SK-N-SH (cell line): ENCODE measurements at regions of chr1 and their contacts with region 1.

Region 1: DNA sequence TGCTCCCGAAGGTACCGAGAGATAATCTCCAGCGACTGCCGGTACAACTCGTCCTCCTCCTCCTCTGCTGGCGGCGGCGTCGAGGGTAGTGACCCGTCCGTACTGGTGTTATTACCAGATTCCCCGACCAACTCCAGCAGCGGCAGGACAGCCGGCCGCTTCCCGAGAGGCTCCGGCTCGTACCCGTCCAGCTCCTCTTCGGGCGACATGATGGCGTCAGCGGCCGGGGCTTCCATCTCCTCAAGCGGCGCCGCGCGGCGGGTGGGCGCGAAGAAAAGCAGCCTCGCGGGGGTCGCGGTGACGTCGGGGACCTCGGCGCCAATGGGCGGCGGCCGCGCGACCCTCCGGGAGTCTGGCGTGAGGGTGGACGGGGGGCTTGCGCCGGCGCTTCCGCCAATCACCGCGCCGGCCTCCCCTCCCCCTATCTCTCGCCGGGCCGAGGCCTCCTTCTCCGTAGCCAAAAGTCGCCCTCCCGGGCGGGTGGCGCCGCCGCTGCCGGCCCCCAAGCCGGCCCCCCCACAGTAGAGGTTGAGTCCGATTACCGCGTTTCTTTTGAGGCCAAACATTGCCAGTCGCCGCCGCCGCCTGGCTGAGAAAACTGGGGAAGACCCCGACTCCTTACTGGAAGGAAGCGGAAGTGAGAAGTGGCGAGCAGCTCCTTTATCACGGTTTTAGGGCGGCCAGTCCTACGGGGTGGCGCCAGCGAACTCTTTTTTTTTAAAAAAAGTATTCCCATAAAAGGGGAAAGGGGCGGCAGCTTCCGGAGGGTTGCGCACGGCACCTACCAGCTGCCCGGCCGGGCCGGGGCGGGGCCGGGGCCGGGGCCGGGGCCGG is at the start of gene MCL1:
- DNase-seq: peak; percentile 94
- H3K4me3 ChIP-seq: peak within 1 kb of the TSS; percentile 95 to 98
- H3K27ac ChIP-seq: peak within 1 kb of the TSS; percentile 97 to 100
- H3K4me1 ChIP-seq: peaks cover 9 to 28% of the 10 kb centered on the region in 2 experiments; a peak in 3 of 4 replicates
- H3K27me3 ChIP-seq: no peaks in the 10 kb centered on the region
- CTCF ChIP-seq: no peak
- EP300 ChIP-seq: 0 out of 4 replicates have a peak, but pooled peaks of 1 of the 2 experiments have one; percentile 56
- RAD21 ChIP-seq: no peak
- polyA plus RNA-seq, gene MCL1: 110 and 131 TPM in 2 replicates

Region 2: GRCh38 chr1:150449451-150449850 is 129.7 kb before region 1 on chr1:
- CTCF ChIA-PET with region 1: no interaction called
- POLR2A ChIA-PET with region 1: no interaction called
- DNase-seq: no peak
- H3K4me3 ChIP-seq: no peak overlapping the region
- H3K27ac ChIP-seq: no peak overlapping the region
- H3K4me1 ChIP-seq: no peaks in the 10 kb centered on the region
- H3K27me3 ChIP-seq: no peaks in the 10 kb centered on the region
- CTCF ChIP-seq: no peak
- EP300 ChIP-seq: no peak
- RAD21 ChIP-seq: no peak

Region 3: GRCh38 chr1:150567717-150568593 is 11.2 kb before region 1 on chr1:
- CTCF ChIA-PET with region 1: interaction called, 142 read pairs
- POLR2A ChIA-PET with region 1: interaction called, 149 read pairs
- DNase-seq: peak; percentile 56
- H3K4me3 ChIP-seq: peak overlapping the region in 1 of 2 experiments; percentile 5; a peak in 1 of 4 replicates
- H3K27ac ChIP-seq: peak overlapping the region; percentile 83 to 100
- H3K4me1 ChIP-seq: peaks cover 35 to 41% of the 10 kb centered on the region in 2 experiments
- H3K27me3 ChIP-seq: no peaks in the 10 kb centered on the region
- CTCF ChIP-seq: no peak
- EP300 ChIP-seq: no peak
- RAD21 ChIP-seq: no peak

Region 4: DNA sequence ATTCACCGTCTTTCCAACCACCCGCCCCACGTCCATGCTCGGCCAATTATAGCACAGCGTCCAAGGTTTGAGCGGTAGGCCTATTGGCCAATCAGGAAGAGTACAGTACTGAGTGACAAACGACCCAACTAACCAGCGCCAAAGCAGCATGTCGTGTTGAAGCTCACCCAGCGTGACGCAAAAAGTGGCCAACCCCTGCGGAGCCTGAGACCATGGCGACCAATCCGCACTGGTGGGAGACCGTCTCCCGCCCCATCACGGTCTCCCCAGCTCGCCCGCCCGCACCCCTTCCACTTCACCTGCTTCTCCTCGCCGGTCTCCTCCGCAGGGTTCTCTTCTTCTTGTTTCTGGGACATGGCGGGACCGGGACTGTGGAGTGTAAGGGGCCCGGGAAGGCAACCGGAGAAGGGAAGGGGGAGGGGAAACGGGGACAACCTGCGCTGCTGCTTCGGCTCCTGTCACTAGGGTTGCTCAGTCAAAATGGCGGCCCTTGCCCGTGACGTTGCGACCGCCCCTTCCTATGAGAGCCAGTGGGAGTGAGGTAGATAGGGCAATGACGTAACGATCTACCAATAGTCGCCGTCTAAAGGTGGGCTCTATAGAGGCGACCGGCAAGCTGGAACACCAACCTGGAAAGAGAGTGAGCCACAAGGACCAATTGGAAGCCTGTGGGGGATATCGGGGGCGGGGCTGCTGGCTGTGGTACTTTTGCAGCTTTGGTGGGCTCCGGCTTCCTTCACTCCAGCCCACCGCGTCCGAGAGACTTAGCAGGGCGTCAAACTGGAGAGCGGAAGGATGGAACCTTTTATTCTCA is 50.1 kb after region 1 on chr1 and contains the start of gene ENSA:
- CTCF ChIA-PET with region 1: no interaction called
- POLR2A ChIA-PET with region 1: interaction called, 14 read pairs
- DNase-seq: peak; percentile 87
- H3K4me3 ChIP-seq: peak within 1 kb of the TSS; percentile 84 to 86
- H3K27ac ChIP-seq: peak within 1 kb of the TSS; percentile 89 to 91
- H3K4me1 ChIP-seq: peaks cover 14 to 16% of the 10 kb centered on the region in 2 experiments
- H3K27me3 ChIP-seq: no peaks in the 10 kb centered on the region
- CTCF ChIP-seq: no peak
- EP300 ChIP-seq: peak in 1 of 2 experiments; percentile 4; a peak in 1 of 4 replicates
- RAD21 ChIP-seq: no peak
- polyA plus RNA-seq, gene ENSA: 47.4 and 56.3 TPM in 2 replicates

Region 5: DNA sequence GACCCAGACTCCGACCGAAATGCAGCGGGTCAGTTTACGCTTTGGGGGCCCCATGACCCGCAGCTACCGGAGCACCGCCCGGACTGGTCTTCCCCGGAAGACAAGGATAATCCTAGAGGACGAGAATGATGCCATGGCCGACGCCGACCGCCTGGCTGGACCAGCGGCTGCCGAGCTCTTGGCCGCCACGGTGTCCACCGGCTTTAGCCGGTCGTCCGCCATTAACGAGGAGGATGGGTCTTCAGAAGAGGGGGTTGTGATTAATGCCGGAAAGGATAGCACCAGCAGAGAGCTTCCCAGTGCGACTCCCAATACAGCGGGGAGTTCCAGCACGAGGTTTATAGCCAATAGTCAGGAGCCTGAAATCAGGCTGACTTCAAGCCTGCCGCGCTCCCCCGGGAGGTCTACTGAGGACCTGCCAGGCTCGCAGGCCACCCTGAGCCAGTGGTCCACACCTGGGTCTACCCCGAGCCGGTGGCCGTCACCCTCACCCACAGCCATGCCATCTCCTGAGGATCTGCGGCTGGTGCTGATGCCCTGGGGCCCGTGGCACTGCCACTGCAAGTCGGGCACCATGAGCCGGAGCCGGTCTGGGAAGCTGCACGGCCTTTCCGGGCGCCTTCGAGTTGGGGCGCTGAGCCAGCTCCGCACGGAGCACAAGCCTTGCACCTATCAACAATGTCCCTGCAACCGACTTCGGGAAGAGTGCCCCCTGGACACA is 468.9 kb after region 1 on chr1:
- CTCF ChIA-PET with region 1: no interaction called
- POLR2A ChIA-PET with region 1: no interaction called
- DNase-seq: peak; percentile 79
- H3K4me3 ChIP-seq: peak overlapping the region; percentile 73 to 77
- H3K27ac ChIP-seq: peak overlapping the region; percentile 70 to 95
- H3K4me1 ChIP-seq: peaks cover 0 to 12% of the 10 kb centered on the region in 2 experiments; a peak in 2 of 4 replicates
- H3K27me3 ChIP-seq: no peaks in the 10 kb centered on the region
- CTCF ChIP-seq: peak; percentile 61
- EP300 ChIP-seq: no peak
- RAD21 ChIP-seq: no peak; the same call in 1 of the 2 replicates